Left ventricle myocardium inferior (tissue), 1 donor: ENCODE measurements at regions of chr18 and their contacts with region 1.

Region 1: DNA sequence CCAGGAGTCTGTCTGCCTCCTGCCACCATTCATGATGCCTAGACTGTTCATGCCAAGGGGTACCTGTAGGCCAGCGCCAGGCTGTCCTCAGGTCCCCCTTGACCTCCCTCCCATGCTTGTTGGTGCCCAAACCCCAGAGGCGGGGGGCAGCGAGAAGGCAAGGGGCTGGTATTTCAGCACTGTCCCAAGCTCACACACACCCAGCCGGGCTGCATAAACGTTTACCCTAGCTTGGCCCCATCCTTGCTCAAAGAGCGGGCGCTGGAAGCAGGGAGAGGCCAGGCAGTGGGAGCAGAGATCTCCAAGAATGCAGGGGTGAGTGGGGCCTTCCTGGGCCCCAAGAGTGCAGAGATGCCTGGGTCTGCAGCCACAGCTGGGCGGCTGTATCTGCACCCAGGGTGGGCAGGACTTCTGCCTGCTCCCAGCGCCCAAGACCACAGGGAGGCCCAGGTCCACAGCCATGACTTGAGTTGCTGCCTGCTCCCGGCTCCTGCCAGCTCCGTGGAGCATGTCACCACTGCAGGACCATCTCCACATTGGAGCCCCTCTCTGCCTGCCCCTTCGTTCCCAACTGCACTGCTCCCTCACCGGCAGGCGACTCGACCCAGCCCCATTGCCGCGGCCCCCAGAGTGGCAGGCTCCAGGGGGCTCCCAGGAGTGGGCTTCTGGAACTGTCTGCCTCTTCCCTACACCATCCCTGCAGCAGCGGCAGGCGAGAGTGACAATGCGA is 616.6 kb downstream of the METTL4 start:
- DNase-seq: no peak
- H3K4me3 ChIP-seq: no peak overlapping the region
- H3K27ac ChIP-seq: no peak overlapping the region
- H3K4me1 ChIP-seq: no peaks in the 10 kb centered on the region
- H3K27me3 ChIP-seq: no peaks in the 10 kb centered on the region
- CTCF ChIP-seq: no peak

Region 2: DNA sequence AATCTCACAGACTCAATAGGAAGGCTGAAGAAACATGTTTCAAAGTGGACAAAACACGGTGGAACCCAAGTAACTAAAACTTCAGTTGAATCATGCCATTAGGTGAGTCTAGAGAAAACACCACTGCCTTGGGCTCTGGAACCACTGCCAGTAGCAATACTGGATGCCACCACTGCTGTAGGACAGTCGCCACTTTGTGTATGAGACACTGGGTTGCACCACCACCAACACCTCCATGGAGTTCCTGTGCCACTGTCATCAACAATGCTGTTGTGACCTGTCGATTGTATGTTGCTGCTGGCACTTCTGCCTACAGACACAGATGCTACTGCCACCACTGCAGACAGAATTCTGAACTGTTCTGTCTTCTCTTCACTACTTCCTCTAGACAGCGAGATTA is 70.1 kb before region 1 on chr18:
- intact Hi-C with region 1: loop called (anchors 10 kb)
- DNase-seq: no peak
- H3K4me3 ChIP-seq: no peak overlapping the region
- H3K27ac ChIP-seq: no peak overlapping the region
- H3K4me1 ChIP-seq: no peaks in the 10 kb centered on the region
- H3K27me3 ChIP-seq: no peaks in the 10 kb centered on the region
- CTCF ChIP-seq: no peak